Gastrocnemius medialis (tissue), 4 donors: ENCODE measurements at regions of chr6 and their contacts with region 1.

Region 1: DNA sequence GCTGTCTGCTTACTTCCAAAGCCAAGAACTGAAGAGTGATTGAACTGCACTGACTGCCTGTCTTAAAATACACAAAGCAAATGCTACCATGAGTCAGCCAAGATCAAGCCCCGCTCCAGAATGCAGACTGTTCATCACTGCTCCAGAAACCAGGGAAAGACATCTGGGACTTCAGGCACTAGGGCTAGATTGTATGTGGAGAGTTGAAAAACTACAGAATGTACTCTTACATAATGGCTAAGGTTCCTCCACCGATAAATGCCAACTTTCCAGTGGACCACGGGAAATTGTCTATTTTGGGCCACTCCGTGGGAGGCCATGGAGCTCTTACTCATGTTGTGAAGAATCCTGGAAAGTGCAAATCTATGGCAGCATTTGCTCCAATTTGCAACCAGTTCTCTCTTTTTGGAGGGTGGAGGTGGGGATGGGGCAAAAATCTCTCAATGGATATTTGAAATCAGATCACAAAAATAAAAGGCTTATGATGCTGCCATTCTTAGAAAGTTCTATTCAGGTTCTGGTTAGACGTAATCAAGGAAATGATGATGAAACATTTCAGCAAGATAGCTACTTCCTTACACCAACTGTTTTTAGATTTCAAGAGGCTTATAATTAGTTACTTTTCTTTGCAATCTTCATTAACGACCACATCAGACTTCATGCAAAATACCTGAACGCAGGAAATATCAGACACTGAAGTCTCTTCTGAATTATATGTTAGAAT is 11.8 kb upstream of the CAP2 start:
- DNase-seq: peak; percentile 56 to 79
- ATAC-seq: peak; percentile 96
- H3K4me3 ChIP-seq: no peak overlapping the region
- H3K27ac ChIP-seq: peak overlapping the region; percentile 85 to 97 (median 88)
- H3K4me1 ChIP-seq: peaks cover 28 to 33% of the 10 kb centered on the region in 2 donors
- H3K27me3 ChIP-seq: no peaks in the 10 kb centered on the region
- CTCF ChIP-seq: no peak
- POLR2A ChIP-seq: no peak

Region 2: DNA sequence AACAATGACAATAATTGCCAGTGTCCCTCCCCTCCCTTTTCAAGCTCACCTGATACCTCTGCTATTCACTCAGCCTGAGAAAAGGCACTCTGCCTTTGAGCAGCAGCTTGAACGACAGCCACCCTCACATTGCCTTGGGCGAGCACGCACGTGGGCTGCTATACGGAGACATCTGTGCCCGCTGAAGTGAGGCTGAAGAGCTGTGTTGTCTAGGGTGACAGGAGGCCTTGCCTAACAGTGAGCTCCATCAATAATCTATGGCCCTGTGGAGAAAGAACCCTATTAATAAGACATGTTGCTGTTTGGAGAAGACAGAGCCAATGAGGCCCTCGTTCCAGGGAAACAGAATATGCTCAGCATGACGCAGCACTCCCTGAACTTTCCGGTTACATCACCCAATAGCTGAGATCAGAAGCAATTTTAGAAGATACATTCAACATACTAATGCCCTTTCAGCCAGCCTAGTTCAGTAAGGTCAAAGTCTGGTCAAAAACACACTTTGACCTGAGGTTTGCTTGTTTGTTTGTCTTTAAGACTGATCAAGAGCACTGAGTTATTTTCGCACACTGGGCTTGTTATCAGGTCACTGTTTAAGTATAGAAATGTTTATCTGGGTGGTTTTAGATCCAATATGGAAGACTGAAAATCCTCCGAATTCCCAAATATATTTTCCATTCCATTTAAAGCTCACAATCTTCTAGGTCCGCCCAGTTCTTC is 69.8 kb before region 1 on chr6:
- in situ Hi-C with region 1: loop called in 1 of 4 experiments (anchors 10 kb)
- intact Hi-C with region 1: no loop called
- DNase-seq: peak; percentile 56 to 82
- ATAC-seq: peak; percentile 90 to 96
- H3K4me3 ChIP-seq: peak overlapping the region; percentile 24 to 45 (median 36)
- H3K27ac ChIP-seq: peak overlapping the region; percentile 88 to 97 (median 94)
- H3K4me1 ChIP-seq: peaks cover 9 to 16% of the 10 kb centered on the region in 2 donors
- H3K27me3 ChIP-seq: no peaks in the 10 kb centered on the region
- CTCF ChIP-seq: no peak
- POLR2A ChIP-seq: peak; percentile 76 to 77

Region 3: GRCh38 chr6:17318435-17319165 is 63.0 kb before region 1 on chr6:
- in situ Hi-C with region 1: loop called in 1 of 4 experiments (anchors 10 kb)
- intact Hi-C with region 1: loop called (anchors 1 kb)
- DNase-seq: peak; percentile 75 to 89
- ATAC-seq: peak; percentile 98
- H3K4me3 ChIP-seq: no peak overlapping the region
- H3K27ac ChIP-seq: peak overlapping the region; percentile 88 to 97 (median 94)
- H3K4me1 ChIP-seq: peaks cover 24 to 32% of the 10 kb centered on the region in 2 donors
- H3K27me3 ChIP-seq: no peaks in the 10 kb centered on the region
- CTCF ChIP-seq: no peak
- POLR2A ChIP-seq: peak; percentile 51 to 74